HCT116 (cell line): ENCODE measurements at regions of chr1 and their contacts with region 1.

Region 1: DNA sequence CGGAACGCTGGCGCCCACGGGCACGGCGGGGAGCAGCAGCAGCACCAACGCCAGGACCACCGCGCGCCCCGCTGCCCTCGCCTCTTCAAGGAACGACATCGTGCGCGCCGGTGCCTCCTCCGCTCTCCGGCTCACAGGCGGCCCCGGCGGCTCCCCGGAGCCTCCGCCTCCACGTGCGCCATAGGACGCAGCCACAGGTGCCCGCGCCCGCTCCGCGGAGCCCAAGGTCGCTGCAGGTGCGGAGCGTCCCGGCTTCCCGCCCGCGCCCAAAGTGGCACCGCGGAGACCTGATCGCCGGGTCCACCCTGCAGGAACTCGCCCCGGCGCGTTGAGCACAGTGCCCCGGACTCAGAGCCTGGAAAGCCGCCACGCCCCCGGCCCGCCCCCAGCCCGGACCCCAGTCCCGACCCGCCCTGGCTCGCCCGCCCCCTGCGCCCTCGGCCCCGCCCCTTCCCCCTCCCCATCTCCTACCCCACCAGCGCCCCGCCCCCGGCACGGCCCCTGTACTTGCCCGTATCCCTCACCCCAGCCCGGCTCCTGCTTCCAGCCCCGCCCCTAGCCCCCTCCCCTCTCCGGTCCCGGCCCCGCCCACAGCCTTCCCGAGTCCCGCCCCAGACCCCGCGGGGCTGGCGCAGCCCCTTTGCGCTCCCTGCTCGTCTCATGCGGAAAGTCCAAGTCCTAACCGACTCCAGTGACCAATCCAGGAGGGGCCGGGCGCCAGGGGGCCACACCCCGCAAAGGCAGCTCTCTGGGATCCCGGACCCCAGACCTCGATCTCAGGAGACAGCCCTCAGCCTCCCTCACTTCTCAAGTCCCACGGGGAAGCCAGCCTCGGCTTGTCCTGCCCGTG is at the start of gene MEGF6:
- DNase-seq: peak; percentile 69
- ATAC-seq: peak; percentile 78
- H3K4me3 ChIP-seq: peak within 1 kb of the TSS; percentile 58 to 72
- H3K27ac ChIP-seq: peak within 1 kb of the TSS; percentile 62; the same call in 1 of the 2 replicates
- H3K4me1 ChIP-seq: peaks cover 39 to 53% of the 10 kb centered on the region in 2 experiments
- H3K27me3 ChIP-seq: no peaks in the 10 kb centered on the region
- CTCF ChIP-seq: no peak
- POLR2A ChIP-seq: no peak
- RAD21 ChIP-seq: no peak
- total RNA-seq, gene MEGF6: 47.6 TPM

Region 2: DNA sequence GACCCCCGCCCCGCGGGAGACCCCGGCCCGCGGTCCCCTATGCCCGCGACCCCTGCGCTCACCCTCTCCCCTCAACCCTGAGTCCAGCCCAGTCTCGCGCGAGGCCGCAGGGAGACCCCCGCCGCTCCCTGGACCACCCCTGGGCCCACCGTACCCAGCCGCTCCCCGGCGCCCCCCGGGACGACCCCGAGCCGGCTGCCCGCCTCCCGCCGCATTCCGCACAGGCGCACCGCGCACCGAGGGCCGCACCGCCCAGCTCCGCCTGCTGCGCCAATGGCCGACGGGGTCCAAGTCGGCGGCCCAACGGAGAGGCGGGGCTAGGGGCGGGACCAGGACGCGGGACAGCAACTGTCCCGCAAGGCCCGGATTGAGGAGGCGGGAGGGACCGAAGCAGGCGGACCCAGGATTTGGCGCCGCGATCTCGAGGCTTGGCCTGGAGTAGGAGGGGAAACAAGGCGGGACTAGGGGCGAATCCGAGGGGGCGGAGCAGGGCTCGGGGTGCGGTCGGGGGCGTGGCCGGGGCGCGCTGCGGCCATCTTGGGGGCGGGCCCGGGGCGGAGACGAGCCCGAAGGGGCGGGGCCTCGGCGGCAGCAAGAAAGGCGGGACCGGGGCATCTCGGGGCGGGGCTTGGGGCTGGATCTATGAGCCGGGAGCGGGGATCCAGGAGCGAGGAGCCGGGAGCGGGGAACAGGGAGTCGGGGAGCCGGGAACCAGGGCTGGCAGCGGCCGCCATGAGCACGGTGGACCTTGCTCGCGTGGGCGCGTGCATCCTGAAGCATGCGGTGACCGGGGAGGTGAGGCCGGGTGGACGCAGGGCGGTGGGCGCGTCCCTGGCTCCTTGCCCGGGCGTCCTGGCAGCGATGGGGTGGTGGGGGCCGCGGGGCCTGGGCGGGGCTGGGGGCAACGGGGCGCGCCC is 1025.0 kb before region 1 on chr1 and contains the start of gene PRXL2B:
- CTCF ChIA-PET with region 1: no interaction called
- POLR2A ChIA-PET with region 1: no interaction called
- RAD21 ChIA-PET with region 1: no interaction called
- intact Hi-C with region 1: loop called (anchors 10 kb)
- DNase-seq: peak; percentile 94
- ATAC-seq: peak; percentile 86
- H3K4me3 ChIP-seq: peak within 1 kb of the TSS; percentile 75 to 90
- H3K27ac ChIP-seq: peak within 1 kb of the TSS; percentile 81
- H3K4me1 ChIP-seq: peaks cover 4 to 31% of the 10 kb centered on the region in 2 experiments; a peak in 3 of 4 replicates
- H3K27me3 ChIP-seq: no peaks in the 10 kb centered on the region
- CTCF ChIP-seq: no peak
- POLR2A ChIP-seq: peak; percentile 27
- RAD21 ChIP-seq: no peak
- total RNA-seq, gene PRXL2B: 32.2 TPM

Region 3: DNA sequence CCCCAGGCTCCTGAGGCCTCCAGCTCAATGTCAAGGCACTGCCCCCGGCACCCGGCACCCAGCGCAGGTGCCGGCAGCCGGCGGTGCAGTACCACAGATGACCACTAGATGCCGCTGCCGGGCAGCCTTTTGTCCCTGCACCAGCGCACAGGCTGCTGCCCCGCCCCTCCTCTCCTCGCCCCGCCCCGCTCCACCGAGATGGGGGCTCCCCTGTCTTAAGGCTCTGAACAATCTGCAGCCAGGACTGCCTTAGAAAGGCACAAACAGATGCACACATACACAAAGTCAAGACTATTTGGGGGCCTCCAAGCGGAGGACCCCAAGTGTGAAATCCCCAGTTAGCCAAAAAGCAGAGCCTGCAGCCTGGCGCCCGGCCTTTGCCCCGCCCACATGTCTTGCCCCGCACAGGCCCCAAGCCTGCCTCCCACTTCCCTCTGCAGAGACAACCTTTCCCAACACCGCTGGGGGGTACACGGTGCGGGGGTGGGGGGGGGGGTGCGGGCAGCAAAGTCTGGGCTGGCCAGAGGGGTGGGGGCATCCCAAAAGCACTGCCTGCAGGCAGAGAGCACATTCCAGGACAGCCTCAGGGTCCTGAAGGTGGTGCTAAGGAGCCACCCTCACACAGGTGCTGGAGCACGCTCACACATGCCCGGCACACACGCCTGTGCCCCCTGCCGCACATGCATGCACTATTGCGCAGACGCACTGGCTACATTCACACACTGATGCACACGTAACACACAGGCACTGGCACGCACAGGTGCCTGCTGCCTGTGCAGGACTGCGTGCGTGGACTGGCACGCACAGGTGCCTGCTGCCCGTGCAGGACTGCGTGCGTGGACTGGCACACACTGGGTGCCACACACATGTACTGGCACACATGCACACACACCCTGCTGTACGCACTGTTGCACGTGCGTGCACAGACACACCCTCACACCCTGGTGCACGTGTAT is 119.8 kb before region 1 on chr1:
- CTCF ChIA-PET with region 1: no interaction called
- POLR2A ChIA-PET with region 1: no interaction called
- RAD21 ChIA-PET with region 1: no interaction called
- intact Hi-C with region 1: loop called (anchors 1 kb)
- DNase-seq: peak; percentile 19
- ATAC-seq: peak; percentile 86
- H3K4me3 ChIP-seq: no peak overlapping the region
- H3K27ac ChIP-seq: peak overlapping the region; percentile 22; the same call in 1 of the 2 replicates
- H3K4me1 ChIP-seq: peaks cover 0 to 26% of the 10 kb centered on the region in 2 experiments; a peak in 1 of 4 replicates
- H3K27me3 ChIP-seq: no peaks in the 10 kb centered on the region
- CTCF ChIP-seq: peak; percentile 86 to 97 (median 93)
- POLR2A ChIP-seq: no peak
- RAD21 ChIP-seq: peak; percentile 94

Region 4: DNA sequence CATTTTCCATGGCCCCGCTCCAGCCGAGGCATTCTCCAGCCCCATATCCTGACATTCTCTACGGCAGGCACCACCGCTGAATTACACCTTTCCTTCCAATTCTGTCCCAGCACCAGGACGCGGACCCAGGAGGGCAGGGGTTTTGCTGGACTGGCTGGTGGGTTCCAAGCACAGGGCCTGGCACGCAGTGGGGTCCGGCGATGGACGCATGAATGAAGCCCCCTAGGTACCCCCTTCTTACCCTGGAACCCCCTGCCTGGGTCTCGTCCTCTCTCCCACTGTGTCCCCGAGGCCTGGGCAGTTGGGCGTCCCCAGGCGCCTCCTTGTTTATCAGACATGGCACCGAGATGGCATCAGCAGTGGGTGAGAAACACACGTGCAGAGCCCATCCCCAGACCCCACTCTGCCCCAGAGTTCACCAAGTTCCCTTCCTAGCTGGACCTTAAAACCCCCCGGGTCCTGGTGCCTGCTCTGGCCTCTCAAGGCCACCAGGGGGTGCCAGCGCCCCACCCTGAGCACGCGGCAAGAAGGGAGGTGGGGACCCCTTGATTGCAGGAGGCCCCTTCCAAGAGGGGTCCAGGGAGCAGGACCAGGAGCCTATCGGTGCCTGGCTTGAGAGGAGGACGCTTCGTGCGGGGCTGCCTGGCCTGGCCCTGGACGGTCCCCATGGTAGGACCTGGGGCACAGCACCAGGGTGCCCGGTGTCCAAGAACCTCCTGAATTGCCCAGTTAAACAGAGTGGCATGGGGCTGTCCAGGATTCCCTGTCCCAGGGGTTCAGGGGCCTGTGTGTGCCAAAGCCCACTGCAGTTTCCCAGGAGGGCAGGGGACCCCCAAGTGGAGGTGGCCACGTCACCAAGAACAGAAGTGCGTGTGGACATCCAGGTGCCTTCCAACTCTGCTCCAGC is 46.2 kb before region 1 on chr1:
- CTCF ChIA-PET with region 1: interaction called, 4 read pairs
- POLR2A ChIA-PET with region 1: no interaction called
- RAD21 ChIA-PET with region 1: interaction called in 1 of 2 experiments, 3 read pairs
- intact Hi-C with region 1: loop called (anchors 1 kb)
- DNase-seq: no peak
- ATAC-seq: peak; percentile 72
- H3K4me3 ChIP-seq: no peak overlapping the region
- H3K27ac ChIP-seq: no peak overlapping the region
- H3K4me1 ChIP-seq: peaks cover 0 to 9% of the 10 kb centered on the region in 2 experiments; a peak in 1 of 4 replicates
- H3K27me3 ChIP-seq: no peaks in the 10 kb centered on the region
- CTCF ChIP-seq: peak; percentile 86 to 92 (median 91); a peak in 5 of 6 replicates
- POLR2A ChIP-seq: no peak
- RAD21 ChIP-seq: peak; percentile 87

Region 5: GRCh38 chr1:3586932-3587678 is 24.3 kb before region 1 on chr1:
- CTCF ChIA-PET with region 1: interaction called, 6 read pairs
- POLR2A ChIA-PET with region 1: no interaction called
- RAD21 ChIA-PET with region 1: interaction called in 1 of 2 experiments, 3 read pairs
- intact Hi-C with region 1: loop called (anchors 1 kb)
- DNase-seq: no peak
- ATAC-seq: no peak
- H3K4me3 ChIP-seq: no peak overlapping the region
- H3K27ac ChIP-seq: no peak overlapping the region
- H3K4me1 ChIP-seq: no peaks in the 10 kb centered on the region
- H3K27me3 ChIP-seq: no peaks in the 10 kb centered on the region
- CTCF ChIP-seq: no peak
- POLR2A ChIP-seq: no peak
- RAD21 ChIP-seq: no peak